Activated naive CD4-positive, alpha-beta T cell treated with anti-CD3 and anti-CD28 coated beads, Interleukin-2, amount 10 ng/mL, durations not matched to agents 7 days and 5 days (primary cell): ENCODE measurements at regions of chr1 and their contacts with region 1.

Region 1: GRCh38 chr1:181134543-181135362 is 46.3 kb downstream of the IER5 start:
- DNase-seq: peak; percentile 41
- H3K4me3 Mint-ChIP-seq: peak overlapping the region; percentile 42
- H3K27ac Mint-ChIP-seq: peak overlapping the region; percentile 89
- H3K4me1 Mint-ChIP-seq: peaks cover 67% of the 10 kb centered on the region
- H3K27me3 Mint-ChIP-seq: peaks cover 34% of the 10 kb centered on the region

Region 2: GRCh38 chr1:180611016-180611930 is 523.5 kb before region 1 on chr1:
- CTCF ChIA-PET with region 1: no interaction called
- DNase-seq: no peak
- H3K4me3 Mint-ChIP-seq: no peak overlapping the region
- H3K27ac Mint-ChIP-seq: no peak overlapping the region
- H3K4me1 Mint-ChIP-seq: peaks cover 2% of the 10 kb centered on the region
- H3K27me3 Mint-ChIP-seq: no peaks in the 10 kb centered on the region

Region 3: DNA sequence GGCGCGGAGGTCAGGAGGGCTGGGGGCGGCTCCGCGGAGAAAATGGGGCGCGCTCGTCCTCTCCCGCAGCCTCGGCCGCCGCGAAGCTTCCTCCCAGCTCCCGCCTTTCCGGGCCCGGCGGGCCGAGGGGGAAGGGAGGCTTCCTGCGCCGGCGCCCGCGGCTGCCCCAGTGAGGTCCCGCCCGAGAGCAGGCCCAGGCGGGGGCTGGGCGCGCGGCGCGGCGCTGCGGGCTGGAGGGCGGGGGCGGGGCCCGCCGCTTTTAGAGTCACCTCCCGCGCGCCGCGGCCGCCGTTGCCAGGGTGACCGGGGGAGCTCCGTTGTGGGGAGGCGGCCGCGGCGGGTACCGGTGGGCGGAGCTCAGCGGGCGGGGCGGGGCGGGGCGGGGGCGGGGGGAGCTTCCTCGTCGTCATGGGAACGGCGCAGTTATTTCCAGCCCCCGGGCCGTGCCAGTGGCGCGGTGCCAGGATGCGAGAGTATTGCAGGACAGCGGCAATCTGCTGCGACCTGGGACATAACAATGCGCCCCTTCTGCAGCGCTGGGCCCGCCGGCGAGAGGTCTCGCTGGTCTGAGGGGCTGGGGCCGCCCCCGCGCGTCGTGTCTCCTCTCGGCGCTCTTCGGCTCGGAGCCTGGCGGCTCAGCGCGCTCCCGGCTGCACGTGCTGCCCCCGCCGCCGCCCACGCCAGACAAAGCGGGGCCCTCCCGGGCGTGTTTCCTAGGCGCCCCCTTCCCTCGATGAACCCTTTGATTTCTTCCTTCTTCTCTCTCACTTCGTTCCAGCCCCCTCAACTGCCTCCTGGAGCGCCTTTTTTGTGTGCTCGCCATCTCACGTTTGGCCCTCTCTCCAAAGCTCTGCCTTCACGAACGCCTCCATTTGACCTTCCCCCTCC is 29.4 kb before region 1 on chr1:
- CTCF ChIA-PET with region 1: interaction called, 59 read pairs
- DNase-seq: peak; percentile 94
- H3K4me3 Mint-ChIP-seq: peak overlapping the region; percentile 79
- H3K27ac Mint-ChIP-seq: peak overlapping the region; percentile 1
- H3K4me1 Mint-ChIP-seq: peaks cover 70% of the 10 kb centered on the region
- H3K27me3 Mint-ChIP-seq: peaks cover 55% of the 10 kb centered on the region

Region 4: GRCh38 chr1:181189691-181190363 is 55.1 kb after region 1 on chr1:
- CTCF ChIA-PET with region 1: no interaction called
- DNase-seq: peak; percentile 76
- H3K4me3 Mint-ChIP-seq: no peak overlapping the region
- H3K27ac Mint-ChIP-seq: no peak overlapping the region
- H3K4me1 Mint-ChIP-seq: peaks cover 2% of the 10 kb centered on the region
- H3K27me3 Mint-ChIP-seq: peaks cover 61% of the 10 kb centered on the region